SK-N-SH (cell line): ENCODE measurements at regions of chr2 and their contacts with region 1.

Region 1: DNA sequence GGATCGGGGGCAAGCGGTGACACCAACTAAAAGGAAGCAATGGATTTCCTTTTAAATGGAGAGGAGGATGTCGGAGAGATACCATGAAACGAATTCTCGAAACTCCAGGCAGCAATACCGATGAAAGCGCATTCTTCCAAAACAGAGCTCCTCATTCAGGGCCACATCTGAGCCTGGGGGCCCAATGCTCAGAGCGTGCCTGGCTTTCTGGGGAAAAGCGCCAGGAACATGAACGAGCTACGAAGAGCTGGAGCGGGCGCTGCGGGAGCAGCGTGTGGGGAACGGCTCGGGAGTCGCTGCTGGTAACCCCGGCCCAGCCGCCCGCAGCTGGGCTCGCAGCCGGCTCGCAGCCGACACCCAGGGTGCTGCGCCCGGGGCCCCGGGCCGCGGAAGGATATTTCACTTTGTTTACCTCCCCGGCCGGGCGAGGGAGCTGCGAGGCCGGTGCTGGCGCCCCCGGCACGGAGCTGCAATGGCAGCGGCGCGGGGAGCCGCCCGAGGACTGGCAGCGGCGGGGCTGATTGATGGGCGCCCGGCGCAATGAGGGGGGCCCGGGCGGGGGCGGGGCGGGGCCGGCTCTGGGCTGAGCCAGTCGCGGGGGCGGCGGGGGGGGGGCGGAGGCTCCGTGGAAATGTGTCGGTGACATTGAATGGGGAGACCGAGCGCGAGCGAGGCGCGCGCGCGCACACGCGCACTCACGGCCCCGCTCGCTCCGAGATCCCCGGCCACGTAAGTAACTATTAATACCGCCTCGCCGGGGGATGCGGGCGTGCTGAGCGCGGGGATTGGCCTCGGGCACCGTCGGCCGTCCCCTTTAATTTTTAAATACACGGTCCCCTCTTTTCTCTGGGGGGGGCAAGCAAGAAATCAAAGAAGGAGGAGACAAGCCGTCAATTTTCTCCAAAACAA is at the start of gene TRIB2:
- DNase-seq: peak; percentile 98
- H3K4me3 ChIP-seq: peak within 1 kb of the TSS; percentile 93 to 98
- H3K27ac ChIP-seq: peak within 1 kb of the TSS; percentile 92 to 93
- H3K4me1 ChIP-seq: peaks cover 28 to 34% of the 10 kb centered on the region in 2 experiments
- H3K27me3 ChIP-seq: no peaks in the 10 kb centered on the region
- CTCF ChIP-seq: 0 out of 2 replicates have a peak, but pooled peaks have one; percentile 19
- EP300 ChIP-seq: no peak; a peak in 2 of 4 replicates
- RAD21 ChIP-seq: peak; percentile 53
- polyA plus RNA-seq, gene TRIB2: 21.0 and 27.5 TPM in 2 replicates

Region 2: DNA sequence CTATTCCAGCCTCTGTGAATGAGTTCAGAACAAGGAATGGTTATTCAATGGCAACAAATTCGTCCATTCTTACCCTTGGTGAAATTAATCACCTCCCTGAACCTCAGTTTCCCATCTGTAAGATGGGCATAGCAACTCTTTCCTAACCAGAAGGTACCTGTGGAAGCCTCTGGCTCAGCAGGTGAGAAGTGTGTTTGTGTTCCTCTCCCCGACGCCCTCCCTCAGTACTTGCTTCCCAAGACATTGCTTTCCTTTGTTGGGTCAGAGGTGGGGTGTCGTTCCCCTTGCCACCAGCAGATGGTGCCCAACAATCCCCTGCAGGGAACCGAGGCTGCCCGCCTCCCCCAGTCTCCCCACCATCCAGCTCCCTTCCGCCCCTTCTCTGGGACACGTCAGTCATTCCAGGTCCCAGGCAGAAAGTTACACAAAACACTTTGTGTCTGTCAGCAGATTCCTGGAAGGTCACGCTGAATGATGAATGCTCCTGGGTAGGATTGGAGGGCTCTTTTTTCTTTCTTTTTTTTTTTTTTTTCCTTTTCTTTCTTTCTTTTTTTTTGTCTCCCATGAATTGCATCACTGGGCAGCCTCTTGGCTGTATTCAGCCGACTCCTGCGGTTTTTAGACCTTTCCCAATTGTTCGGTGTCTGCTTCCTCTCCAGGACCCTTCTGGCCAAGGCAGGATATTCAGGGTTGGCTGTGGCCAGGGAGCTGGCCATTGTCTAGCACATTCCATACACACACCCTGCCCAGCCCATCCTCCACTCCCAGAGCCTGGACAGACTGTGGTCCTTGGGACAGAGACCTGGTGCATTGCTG is 852.8 kb before region 1 on chr2:
- CTCF ChIA-PET with region 1: interaction called, 52 read pairs
- POLR2A ChIA-PET with region 1: interaction called, 4 read pairs
- DNase-seq: peak; percentile 92
- H3K4me3 ChIP-seq: peak overlapping the region in 1 of 2 experiments; percentile 14; a peak in 1 of 4 replicates
- H3K27ac ChIP-seq: peak overlapping the region; percentile 7 to 25; a peak in 1 of 4 replicates
- H3K4me1 ChIP-seq: peaks cover 5 to 6% of the 10 kb centered on the region in 2 experiments; a peak in 3 of 4 replicates
- H3K27me3 ChIP-seq: no peaks in the 10 kb centered on the region
- CTCF ChIP-seq: peak; percentile 99
- EP300 ChIP-seq: peak in 1 of 2 experiments; percentile 13; a peak in 1 of 4 replicates
- RAD21 ChIP-seq: peak; percentile 91

Region 3: GRCh38 chr2:12169721-12170120 is 546.8 kb before region 1 on chr2:
- CTCF ChIA-PET with region 1: interaction called, 17 read pairs
- POLR2A ChIA-PET with region 1: interaction called, 5 read pairs
- DNase-seq: no peak
- H3K4me3 ChIP-seq: no peak overlapping the region
- H3K27ac ChIP-seq: peak overlapping the region in 1 of 2 experiments; percentile 73; a peak in 3 of 4 replicates
- H3K4me1 ChIP-seq: peaks cover 28 to 31% of the 10 kb centered on the region in 2 experiments; a peak in 2 of 4 replicates
- H3K27me3 ChIP-seq: no peaks in the 10 kb centered on the region
- CTCF ChIP-seq: no peak
- EP300 ChIP-seq: no peak
- RAD21 ChIP-seq: no peak

Region 4: DNA sequence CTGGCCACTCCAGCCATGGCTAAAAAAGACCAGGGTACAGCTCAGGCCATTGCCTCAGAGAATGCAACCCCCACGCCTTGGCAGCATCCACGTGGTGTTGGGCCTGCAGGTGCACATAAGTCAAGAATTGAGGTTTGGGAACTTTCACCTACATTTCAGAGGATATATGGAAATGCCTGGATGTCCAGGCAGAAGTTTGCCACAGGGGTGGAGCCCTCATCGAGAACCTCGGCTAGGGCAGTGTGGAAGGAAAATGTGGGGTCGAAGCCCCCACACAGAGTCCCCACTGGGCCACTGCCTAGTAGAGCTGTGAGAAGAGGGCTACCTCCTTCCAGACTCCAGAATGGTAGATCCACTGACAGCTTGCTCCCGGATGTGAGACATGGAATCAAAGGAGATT is 492.8 kb before region 1 on chr2:
- CTCF ChIA-PET with region 1: no interaction called
- POLR2A ChIA-PET with region 1: no interaction called
- DNase-seq: no peak
- H3K4me3 ChIP-seq: no peak overlapping the region
- H3K27ac ChIP-seq: no peak overlapping the region
- H3K4me1 ChIP-seq: peaks cover 0 to 11% of the 10 kb centered on the region in 2 experiments; a peak in 2 of 4 replicates
- H3K27me3 ChIP-seq: no peaks in the 10 kb centered on the region
- CTCF ChIP-seq: no peak
- EP300 ChIP-seq: no peak
- RAD21 ChIP-seq: no peak

Region 5: DNA sequence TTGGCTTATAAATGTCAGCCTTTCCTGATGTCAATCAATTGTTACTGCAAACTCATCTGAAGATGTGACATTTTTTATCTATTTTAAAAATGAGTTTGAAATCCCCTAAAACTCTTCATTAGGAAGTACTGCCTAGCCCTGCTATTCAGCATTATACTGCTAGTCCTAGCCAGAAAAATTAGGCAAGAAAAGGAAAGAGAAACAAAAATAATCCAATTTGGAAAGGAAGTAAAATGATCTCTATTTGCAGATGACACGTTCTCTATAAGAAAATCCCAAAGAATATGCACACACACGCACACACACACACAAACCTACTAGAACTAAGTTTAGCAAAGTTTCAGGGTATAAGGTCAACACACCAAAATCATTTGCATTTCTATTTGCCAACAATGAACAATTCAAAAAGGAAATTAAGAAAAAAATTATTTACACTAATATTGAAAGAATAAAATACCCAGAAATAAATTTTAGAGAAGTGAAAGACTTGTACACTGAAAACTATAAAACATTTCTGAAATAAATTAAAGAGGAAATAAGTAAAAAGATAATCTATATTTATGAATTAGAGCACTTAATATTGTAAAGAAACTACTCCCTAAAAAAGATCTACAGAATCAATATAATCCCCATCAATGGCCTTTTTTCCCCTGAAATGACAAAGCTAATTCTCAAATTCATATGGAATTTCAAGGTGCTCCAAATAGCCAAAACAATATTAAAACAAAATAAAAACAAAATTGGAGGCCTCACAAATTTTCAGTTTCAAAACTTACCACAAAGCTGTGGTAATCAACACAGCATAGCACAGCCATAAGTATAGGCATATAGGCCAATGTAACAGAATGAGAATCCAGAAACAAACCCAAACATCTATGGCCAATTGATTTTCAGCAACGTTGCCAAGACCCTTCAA is 433.5 kb before region 1 on chr2:
- CTCF ChIA-PET with region 1: no interaction called
- POLR2A ChIA-PET with region 1: no interaction called
- DNase-seq: no peak
- H3K4me3 ChIP-seq: no peak overlapping the region
- H3K27ac ChIP-seq: no peak overlapping the region
- H3K4me1 ChIP-seq: peaks cover 3 to 21% of the 10 kb centered on the region in 2 experiments
- H3K27me3 ChIP-seq: no peaks in the 10 kb centered on the region
- CTCF ChIP-seq: no peak
- EP300 ChIP-seq: no peak
- RAD21 ChIP-seq: no peak

Region 6: GRCh38 chr2:12636837-12637581 is 79.5 kb before region 1 on chr2:
- CTCF ChIA-PET with region 1: interaction called, 11 read pairs
- POLR2A ChIA-PET with region 1: interaction called, 5 read pairs
- DNase-seq: peak; percentile 65
- H3K4me3 ChIP-seq: no peak overlapping the region
- H3K27ac ChIP-seq: peak overlapping the region; percentile 45 to 53; a peak in 3 of 4 replicates
- H3K4me1 ChIP-seq: peaks cover 14 to 15% of the 10 kb centered on the region in 2 experiments; a peak in 3 of 4 replicates
- H3K27me3 ChIP-seq: no peaks in the 10 kb centered on the region
- CTCF ChIP-seq: no peak
- EP300 ChIP-seq: peak in 1 of 2 experiments; percentile 93; a peak in 2 of 4 replicates
- RAD21 ChIP-seq: peak; percentile 8; the same call in 1 of the 2 replicates

Region 7: GRCh38 chr2:12742891-12743290 is 26.4 kb after region 1 on chr2:
- CTCF ChIA-PET with region 1: interaction called, 21 read pairs
- POLR2A ChIA-PET with region 1: interaction called, 3 read pairs
- DNase-seq: no peak
- H3K4me3 ChIP-seq: no peak overlapping the region
- H3K27ac ChIP-seq: no peak overlapping the region
- H3K4me1 ChIP-seq: peaks cover 10 to 16% of the 10 kb centered on the region in 2 experiments; a peak in 2 of 4 replicates
- H3K27me3 ChIP-seq: no peaks in the 10 kb centered on the region
- CTCF ChIP-seq: no peak
- EP300 ChIP-seq: no peak
- RAD21 ChIP-seq: no peak

Region 8: GRCh38 chr2:12948961-12949353 is 232.4 kb after region 1 on chr2:
- CTCF ChIA-PET with region 1: interaction called, 25 read pairs
- POLR2A ChIA-PET with region 1: interaction called, 16 read pairs
- DNase-seq: no peak
- H3K4me3 ChIP-seq: no peak overlapping the region; a peak in 1 of 4 replicates
- H3K27ac ChIP-seq: peak overlapping the region; percentile 59 to 100
- H3K4me1 ChIP-seq: peaks cover 32 to 37% of the 10 kb centered on the region in 2 experiments
- H3K27me3 ChIP-seq: no peaks in the 10 kb centered on the region
- CTCF ChIP-seq: no peak
- EP300 ChIP-seq: no peak
- RAD21 ChIP-seq: no peak

Region 9: DNA sequence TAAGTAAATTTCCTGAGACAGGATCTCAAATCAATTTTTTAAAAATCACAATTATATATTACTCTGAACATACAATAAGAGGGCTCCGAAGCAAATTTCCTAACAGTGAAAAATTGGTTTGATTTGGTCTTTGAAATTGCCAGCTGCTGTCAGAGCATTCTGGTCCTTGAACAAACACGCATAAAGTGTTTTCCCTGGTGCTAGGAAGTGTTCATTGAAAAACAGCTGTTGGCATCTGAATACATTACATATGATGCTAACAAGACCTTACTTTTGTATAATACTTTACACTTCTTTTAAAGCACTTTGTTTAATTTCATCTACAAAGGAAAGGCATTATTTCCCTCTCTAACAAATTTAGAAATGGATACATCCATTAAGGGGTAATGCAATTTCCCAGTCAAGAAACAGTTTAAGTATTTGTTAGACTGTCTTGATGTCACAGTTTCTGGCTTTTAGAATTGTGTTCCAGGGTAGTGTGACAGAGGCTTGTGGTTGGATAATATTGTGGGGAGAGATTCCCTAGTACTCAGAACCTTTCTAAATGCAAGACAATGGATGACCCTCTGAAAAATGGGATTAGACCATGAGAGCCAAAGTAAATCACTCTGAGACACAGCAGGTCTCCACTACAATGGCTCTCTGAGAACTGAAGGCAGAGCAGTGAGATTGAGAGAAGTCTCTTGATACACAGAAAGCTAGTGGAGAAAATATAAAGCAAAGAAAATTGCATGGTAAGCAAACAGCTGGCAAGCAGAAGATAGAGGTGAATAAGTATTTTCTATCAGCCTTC is 299.2 kb after region 1 on chr2:
- CTCF ChIA-PET with region 1: interaction called, 15 read pairs
- POLR2A ChIA-PET with region 1: no interaction called
- DNase-seq: no peak
- H3K4me3 ChIP-seq: no peak overlapping the region
- H3K27ac ChIP-seq: peak overlapping the region in 1 of 2 experiments; percentile 62; a peak in 2 of 4 replicates
- H3K4me1 ChIP-seq: peaks cover 0 to 25% of the 10 kb centered on the region in 2 experiments; a peak in 2 of 4 replicates
- H3K27me3 ChIP-seq: peaks cover 5% of the 10 kb centered on the region
- CTCF ChIP-seq: no peak
- EP300 ChIP-seq: 0 out of 4 replicates have a peak, but pooled peaks of 1 of the 2 experiments have one; percentile 29
- RAD21 ChIP-seq: no peak